ENCODE measurements at regions of chr4 and their contacts with region 1.

Region 1: DNA sequence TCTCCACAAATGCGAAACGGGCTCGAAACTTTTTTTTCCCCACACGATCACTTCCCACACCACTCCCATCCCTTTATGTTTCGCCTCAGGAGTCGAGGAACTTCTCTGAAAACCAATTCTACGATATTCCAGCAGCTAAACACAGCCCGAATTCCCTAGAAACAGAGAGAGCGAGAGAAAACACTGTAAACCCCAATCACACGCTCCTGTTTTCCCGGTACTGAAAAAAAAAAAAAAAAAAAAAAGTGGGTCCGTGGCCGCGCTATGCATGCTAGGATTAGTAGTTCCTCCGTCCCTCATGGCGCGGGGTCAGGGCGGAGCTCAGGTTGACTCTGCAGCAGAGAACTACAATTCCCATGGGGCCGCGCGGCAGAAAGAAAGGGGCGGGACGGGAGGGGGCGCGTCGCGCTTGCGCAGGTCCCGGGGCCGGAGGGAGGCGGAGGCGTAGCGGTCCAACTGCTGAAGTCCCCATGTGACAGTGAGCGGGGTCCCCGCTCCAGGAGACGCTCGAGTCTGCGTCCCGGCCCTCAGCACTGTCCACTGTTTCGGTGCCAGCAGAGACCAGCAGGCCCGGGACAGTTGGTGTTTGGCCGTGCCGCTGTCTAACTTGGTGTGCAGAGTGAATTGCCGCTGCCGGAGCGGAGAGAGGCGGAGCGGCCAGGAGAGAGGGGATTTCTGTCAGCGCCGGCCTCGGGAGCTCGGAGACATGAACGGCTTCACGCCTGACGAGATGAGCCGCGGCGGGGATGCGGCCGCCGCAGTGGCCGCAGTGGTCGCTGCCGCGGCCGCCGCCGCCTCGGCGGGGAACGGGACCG is at the start of gene SAP30:
- DNase-seq: peak; percentile 98
- H3K4me3 Mint-ChIP-seq: peak within 1 kb of the TSS; percentile 96
- H3K27ac Mint-ChIP-seq: peak within 1 kb of the TSS; percentile 96
- H3K4me1 Mint-ChIP-seq: peaks cover 20% of the 10 kb centered on the region
- H3K27me3 Mint-ChIP-seq: no peaks in the 10 kb centered on the region
- CTCF ChIP-seq: no peak
- total RNA-seq, gene SAP30: 17.6 and 30.6 TPM in 2 replicates

Region 2: GRCh38 chr4:173346074-173346473 is 24.6 kb before region 1 on chr4:
- CTCF ChIA-PET with region 1: no interaction called
- POLR2A ChIA-PET with region 1: interaction called, 824 read pairs
- intact Hi-C with region 1: no loop called
- DNase-seq: no peak
- H3K4me3 Mint-ChIP-seq: no peak overlapping the region
- H3K27ac Mint-ChIP-seq: no peak overlapping the region
- H3K4me1 Mint-ChIP-seq: no peaks in the 10 kb centered on the region
- H3K27me3 Mint-ChIP-seq: no peaks in the 10 kb centered on the region
- CTCF ChIP-seq: no peak

Region 3: GRCh38 chr4:173380987-173381386 is 10.3 kb after region 1 on chr4:
- CTCF ChIA-PET with region 1: interaction called, 3 read pairs
- POLR2A ChIA-PET with region 1: interaction called, 40 read pairs
- intact Hi-C with region 1: no loop called
- DNase-seq: no peak
- H3K4me3 Mint-ChIP-seq: no peak overlapping the region
- H3K27ac Mint-ChIP-seq: no peak overlapping the region
- H3K4me1 Mint-ChIP-seq: no peaks in the 10 kb centered on the region
- H3K27me3 Mint-ChIP-seq: no peaks in the 10 kb centered on the region
- CTCF ChIP-seq: no peak

Measured in MCF 10A (cell line).